SK-N-SH (cell line): ENCODE measurements at regions of chr2 and their contacts with region 1.

Region 1: DNA sequence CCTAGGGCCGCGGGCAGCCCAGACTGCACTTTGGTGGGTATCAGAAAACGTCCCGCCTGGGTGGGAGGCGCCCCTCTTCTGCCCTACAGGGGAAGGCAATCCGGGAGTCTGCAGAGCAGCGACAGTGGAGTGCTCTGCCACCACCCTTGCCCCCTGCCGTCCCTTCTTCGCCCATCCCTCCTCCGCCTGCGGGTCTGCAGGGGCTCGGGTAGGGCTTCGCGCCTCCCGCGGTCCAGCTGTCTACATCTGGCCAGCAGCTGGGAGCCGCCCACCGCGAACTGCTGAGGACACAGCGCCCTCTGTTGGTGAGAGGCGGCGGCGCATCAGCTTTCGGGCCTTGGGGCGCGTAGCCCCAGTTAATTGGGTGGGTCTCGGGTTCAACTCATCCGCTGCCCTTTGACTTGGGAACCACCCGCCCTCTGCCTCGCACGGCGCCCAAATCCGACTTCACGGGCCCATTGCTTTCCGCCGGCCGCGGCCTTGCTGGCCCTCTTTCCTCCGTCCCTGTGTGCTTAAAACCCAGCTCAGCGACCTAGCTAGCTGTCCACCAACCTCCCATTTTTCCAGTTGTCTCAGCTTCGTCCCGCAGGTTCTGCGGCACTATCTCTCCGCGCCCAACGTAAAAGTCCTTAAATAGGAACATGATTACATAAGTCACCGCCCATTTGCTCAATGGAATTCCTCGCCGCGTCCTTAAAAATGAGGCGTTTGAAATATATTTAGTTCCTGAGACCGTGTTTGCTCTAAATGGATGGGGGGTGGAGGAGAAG is 17.6 kb downstream of the WNT10A start:
- DNase-seq: peak; percentile 94
- H3K4me3 ChIP-seq: peak overlapping the region; percentile 25 to 33; a peak in 2 of 4 replicates
- H3K27ac ChIP-seq: no peak overlapping the region
- H3K4me1 ChIP-seq: peaks cover 0 to 25% of the 10 kb centered on the region in 2 experiments; a peak in 1 of 4 replicates
- H3K27me3 ChIP-seq: peaks cover 46% of the 10 kb centered on the region
- CTCF ChIP-seq: peak; percentile 92
- EP300 ChIP-seq: no peak
- RAD21 ChIP-seq: peak; percentile 81

Region 2: GRCh38 chr2:218860950-218861381 is 37.3 kb before region 1 on chr2:
- CTCF ChIA-PET with region 1: interaction called, 247 read pairs
- POLR2A ChIA-PET with region 1: interaction called, 4 read pairs
- DNase-seq: peak; percentile 92
- H3K4me3 ChIP-seq: peak overlapping the region in 1 of 2 experiments; percentile 49; a peak in 2 of 4 replicates
- H3K27ac ChIP-seq: peak overlapping the region in 1 of 2 experiments; percentile 16; a peak in 1 of 4 replicates
- H3K4me1 ChIP-seq: peaks cover 7 to 71% of the 10 kb centered on the region in 2 experiments; a peak in 2 of 4 replicates
- H3K27me3 ChIP-seq: peaks cover 46% of the 10 kb centered on the region
- CTCF ChIP-seq: no peak
- EP300 ChIP-seq: no peak
- RAD21 ChIP-seq: no peak

Region 3: DNA sequence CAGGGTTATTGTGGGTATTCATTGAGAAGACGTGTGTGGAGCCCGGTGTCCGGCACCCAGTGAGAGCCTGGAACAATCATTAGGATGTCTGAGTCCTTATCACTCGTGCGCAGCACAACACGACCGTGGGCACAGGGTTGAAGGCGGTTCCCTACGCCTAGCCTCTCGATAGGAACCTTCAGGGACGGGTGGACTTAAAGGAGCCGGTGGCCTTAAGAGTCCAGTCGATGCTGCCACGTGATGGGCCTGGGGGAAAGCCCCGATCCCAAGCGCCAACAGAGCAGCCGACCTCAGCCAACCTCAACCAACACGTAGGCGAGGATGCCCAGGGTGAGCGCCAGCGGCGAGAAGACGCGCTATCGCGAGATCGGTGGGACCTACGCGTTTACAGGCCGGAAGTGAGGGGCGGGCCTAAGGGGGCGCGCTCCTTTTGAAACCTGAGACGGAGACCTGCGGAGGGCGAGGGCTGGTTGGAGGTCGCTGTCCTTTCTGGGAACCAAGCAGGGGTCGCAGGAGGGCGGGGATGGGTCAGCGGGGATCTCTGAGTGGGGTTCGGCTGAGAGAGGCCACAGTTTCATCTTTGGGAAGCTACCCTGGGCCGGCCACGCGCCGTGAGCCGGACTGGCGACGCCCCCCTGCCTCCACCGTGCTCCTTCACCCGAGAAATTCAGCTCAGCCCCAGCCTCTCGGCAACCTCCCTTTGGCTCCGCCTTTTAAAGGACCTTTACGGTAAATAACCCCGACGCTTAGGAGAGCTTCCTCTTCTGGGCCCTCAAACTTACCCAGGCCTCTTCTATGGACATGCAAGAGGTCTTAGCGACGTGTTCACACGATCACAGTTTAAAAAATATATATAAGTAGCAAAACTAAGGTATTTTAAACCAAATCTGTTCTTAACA is 10.7 kb after region 1 on chr2:
- CTCF ChIA-PET with region 1: interaction called, 38 read pairs
- POLR2A ChIA-PET with region 1: interaction called, 3 read pairs
- DNase-seq: peak; percentile 93
- H3K4me3 ChIP-seq: peak overlapping the region; percentile 60 to 61
- H3K27ac ChIP-seq: peak overlapping the region in 1 of 2 experiments; percentile 84; a peak in 2 of 4 replicates
- H3K4me1 ChIP-seq: peaks cover 10 to 11% of the 10 kb centered on the region in 2 experiments
- H3K27me3 ChIP-seq: no peaks in the 10 kb centered on the region
- CTCF ChIP-seq: no peak
- EP300 ChIP-seq: no peak
- RAD21 ChIP-seq: no peak

Region 4: DNA sequence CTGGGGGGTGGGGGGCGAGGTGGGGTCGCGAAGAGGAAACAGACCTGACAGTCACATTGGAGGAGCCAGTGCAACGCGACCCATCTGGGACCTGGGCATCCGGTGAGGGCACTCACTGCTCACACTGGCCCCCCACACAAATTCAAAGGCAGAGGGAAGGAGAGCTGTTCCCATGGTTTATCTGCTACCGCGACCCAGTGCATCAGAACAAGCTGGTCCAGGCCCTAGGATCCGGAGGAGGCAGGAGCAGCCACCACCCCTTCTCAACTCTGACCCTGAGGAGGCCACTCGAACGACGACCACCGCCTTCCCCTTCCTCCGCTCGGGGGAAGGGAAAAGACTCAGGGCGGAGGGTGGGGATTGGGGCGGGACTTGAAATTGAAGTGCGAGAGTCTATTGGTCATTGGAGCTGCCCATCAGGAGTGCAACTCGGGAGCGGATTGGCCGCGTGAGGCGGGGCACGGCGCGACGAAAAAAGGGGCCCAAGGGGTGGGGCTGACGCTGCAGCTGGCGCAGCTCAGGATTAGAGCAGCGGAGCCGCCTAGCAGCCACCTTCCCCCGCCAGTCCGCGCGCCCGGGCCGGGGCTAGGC is 60.9 kb after region 1 on chr2 and contains the start of gene CDK5R2:
- CTCF ChIA-PET with region 1: interaction called, 45 read pairs
- POLR2A ChIA-PET with region 1: interaction called, 9 read pairs
- DNase-seq: peak; percentile 98
- H3K4me3 ChIP-seq: peak within 1 kb of the TSS; percentile 60 to 63
- H3K27ac ChIP-seq: peak within 1 kb of the TSS in 1 of 2 experiments; percentile 94; a peak in 2 of 4 replicates
- H3K4me1 ChIP-seq: peaks cover 8 to 47% of the 10 kb centered on the region in 2 experiments; a peak in 2 of 4 replicates
- H3K27me3 ChIP-seq: peaks cover 41% of the 10 kb centered on the region
- CTCF ChIP-seq: no peak
- EP300 ChIP-seq: peak in 1 of 2 experiments; percentile 32; a peak in 1 of 4 replicates
- RAD21 ChIP-seq: no peak
- polyA plus RNA-seq, gene CDK5R2: 0.19 and 0.26 TPM in 2 replicates

Region 5: DNA sequence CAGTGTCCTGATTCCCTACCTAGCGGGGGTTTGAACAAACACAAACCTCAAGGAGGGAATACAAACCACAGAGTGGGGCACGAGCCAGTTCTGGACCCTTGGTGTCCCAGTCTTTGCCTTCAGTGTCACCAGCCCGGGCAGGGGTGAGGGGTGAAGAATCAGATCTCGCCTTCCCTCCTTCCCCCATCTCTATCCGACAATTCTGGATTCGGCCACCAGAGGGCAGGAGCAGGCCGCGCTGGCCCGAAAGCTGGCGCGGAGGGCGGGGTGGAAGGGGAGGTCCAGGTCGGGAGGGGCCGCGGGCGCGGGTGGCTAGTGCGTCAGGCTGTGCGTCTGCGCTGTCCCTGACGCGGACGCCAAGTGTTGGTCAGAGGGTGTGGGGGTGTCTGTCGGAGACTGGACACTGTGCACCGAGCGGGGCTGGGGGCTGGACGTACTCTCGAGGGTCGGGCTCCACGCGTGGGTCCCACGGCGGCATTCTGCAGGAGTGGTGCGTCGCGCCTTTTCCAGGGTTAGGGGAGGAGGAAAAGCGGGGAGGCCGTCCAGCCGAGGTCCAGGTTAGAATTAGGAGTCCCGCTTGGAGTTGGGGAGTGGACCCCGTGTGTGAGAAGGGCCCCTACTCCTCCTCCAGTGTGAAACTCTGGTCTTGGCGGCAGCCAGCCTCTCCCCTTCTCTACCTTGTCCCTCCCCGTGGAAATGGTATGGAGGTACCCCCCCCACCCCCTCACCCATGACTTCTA is 97.8 kb after region 1 on chr2:
- CTCF ChIA-PET with region 1: interaction called, 17 read pairs
- POLR2A ChIA-PET with region 1: no interaction called
- DNase-seq: peak; percentile 96
- H3K4me3 ChIP-seq: peak overlapping the region; percentile 57 to 61
- H3K27ac ChIP-seq: peak overlapping the region in 1 of 2 experiments; percentile 99; a peak in 2 of 4 replicates
- H3K4me1 ChIP-seq: peaks cover 0 to 61% of the 10 kb centered on the region in 2 experiments; a peak in 2 of 4 replicates
- H3K27me3 ChIP-seq: no peaks in the 10 kb centered on the region
- CTCF ChIP-seq: peak; percentile 85
- EP300 ChIP-seq: 0 out of 4 replicates have a peak, but pooled peaks of 1 of the 2 experiments have one; percentile 24
- RAD21 ChIP-seq: peak; percentile 96